Natural killer cell (primary cell): ENCODE measurements at regions of chr6 and their contacts with region 1.

Region 1: DNA sequence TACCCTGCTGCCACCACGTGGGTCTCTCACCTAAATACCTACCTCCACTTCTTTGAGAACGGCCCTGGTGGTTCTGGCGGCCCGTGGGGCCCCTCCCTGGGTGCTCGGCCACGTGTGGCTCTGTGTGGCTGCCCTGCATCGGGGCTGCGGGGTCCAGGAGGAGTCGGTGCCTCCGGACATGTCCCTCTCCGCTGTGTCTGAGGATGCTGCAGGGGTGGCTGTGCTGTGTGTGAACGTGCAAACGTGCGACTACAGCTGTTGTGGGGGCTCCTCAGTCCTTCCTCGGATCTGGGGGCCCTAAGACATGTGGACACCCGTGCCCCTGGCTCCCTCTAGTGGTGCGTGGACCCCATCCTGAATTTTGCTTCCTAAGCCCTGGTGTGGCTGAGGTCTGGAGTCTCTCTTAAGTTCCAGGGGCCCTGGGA is 691.8 kb downstream of the QKI start:
- DNase-seq: peak in 1 of 2 donors; percentile 25
- ATAC-seq: no peak
- H3K4me3 ChIP-seq: no peak overlapping the region
- H3K4me3 Mint-ChIP-seq: no peak overlapping the region
- H3K27ac ChIP-seq: no peak overlapping the region
- H3K27ac Mint-ChIP-seq: no peak overlapping the region
- H3K4me1 ChIP-seq: peaks cover 16% of the 10 kb centered on the region
- H3K4me1 Mint-ChIP-seq: peaks cover 27% of the 10 kb centered on the region in 2 donors
- H3K27me3 ChIP-seq: no peaks in the 10 kb centered on the region
- H3K27me3 Mint-ChIP-seq: peaks cover 16 to 36% of the 10 kb centered on the region in 2 donors
- CTCF ChIP-seq: peak; percentile 28

Region 2: GRCh38 chr6:163984124-163984936 is 122.0 kb before region 1 on chr6:
- intact Hi-C with region 1: loop called (anchors 10 kb)
- DNase-seq: peak in 1 of 2 donors; percentile 4
- ATAC-seq: peak; percentile 81 to 92 (median 84)
- H3K4me3 ChIP-seq: no peak overlapping the region
- H3K4me3 Mint-ChIP-seq: peak overlapping the region; percentile 65
- H3K27ac ChIP-seq: peak overlapping the region; percentile 13
- H3K27ac Mint-ChIP-seq: peak overlapping the region in 1 of 2 donors; percentile 48
- H3K4me1 ChIP-seq: peaks cover 12% of the 10 kb centered on the region
- H3K4me1 Mint-ChIP-seq: peaks cover 23 to 28% of the 10 kb centered on the region in 2 donors
- H3K27me3 ChIP-seq: no peaks in the 10 kb centered on the region
- H3K27me3 Mint-ChIP-seq: peaks cover 0 to 6% of the 10 kb centered on the region in 2 donors
- CTCF ChIP-seq: no peak

Region 3: DNA sequence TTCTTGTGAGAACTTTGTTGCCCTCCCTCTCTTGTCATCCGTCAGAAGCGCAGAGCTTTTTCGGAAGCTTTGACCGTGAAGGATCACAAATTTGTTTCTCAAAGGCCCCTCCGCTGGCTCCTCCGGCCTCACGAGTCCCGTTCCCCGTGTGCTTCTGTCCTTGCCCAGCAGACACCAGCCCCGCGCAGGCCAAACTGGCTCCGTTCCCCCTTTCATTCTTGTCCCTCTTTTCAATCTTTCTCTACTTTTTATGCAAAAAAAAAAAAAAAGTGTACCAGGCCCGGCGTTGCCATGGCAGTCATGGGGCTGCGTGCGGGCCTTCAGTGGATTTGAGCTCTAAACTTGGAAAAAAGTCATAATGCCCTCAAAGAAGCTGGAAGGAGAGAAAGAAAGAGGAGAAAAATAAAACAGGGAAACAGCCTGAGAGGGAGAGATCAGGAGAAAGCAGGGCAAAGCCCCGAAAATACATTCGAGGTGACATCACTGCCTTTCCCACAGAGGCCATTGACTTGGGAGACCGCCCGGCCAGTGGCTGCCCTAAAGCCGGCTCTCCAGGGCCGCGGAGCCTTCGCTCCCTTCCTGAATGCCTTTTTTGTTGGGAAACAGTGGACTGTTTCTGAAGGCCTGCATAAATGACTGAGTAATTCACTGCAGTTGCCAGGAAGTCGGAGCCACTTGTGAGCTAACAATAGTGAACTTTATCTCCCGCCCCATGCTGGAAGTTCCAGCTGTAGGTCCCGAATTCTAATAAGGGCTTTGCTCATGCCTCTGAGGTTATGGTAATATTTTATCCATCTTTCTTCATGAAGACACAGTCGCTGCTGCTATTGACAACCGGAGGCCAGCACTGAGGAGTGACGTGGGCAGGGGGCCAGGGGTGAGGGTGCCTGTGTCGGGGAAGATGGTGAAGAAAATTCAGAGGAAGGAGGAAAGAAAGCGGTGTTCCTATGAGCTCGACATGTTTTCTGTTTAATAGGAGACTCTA is 21.0 kb before region 1 on chr6:
- intact Hi-C with region 1: loop called (anchors 1 kb)
- DNase-seq: no peak
- ATAC-seq: no peak
- H3K4me3 ChIP-seq: peak overlapping the region; percentile 11
- H3K4me3 Mint-ChIP-seq: peak overlapping the region; percentile 81
- H3K27ac ChIP-seq: peak overlapping the region; percentile 54
- H3K27ac Mint-ChIP-seq: peak overlapping the region; percentile 70 to 87
- H3K4me1 ChIP-seq: peaks cover 21% of the 10 kb centered on the region
- H3K4me1 Mint-ChIP-seq: peaks cover 23 to 26% of the 10 kb centered on the region in 2 donors
- H3K27me3 ChIP-seq: no peaks in the 10 kb centered on the region
- H3K27me3 Mint-ChIP-seq: peaks cover 3 to 19% of the 10 kb centered on the region in 2 donors
- CTCF ChIP-seq: no peak

Region 4: GRCh38 chr6:164133095-164133494 is 26.7 kb after region 1 on chr6:
- intact Hi-C with region 1: no loop called
- DNase-seq: no peak
- ATAC-seq: no peak
- H3K4me3 ChIP-seq: no peak overlapping the region
- H3K4me3 Mint-ChIP-seq: no peak overlapping the region
- H3K27ac ChIP-seq: no peak overlapping the region
- H3K27ac Mint-ChIP-seq: no peak overlapping the region
- H3K4me1 ChIP-seq: no peaks in the 10 kb centered on the region
- H3K4me1 Mint-ChIP-seq: no peaks in the 10 kb centered on the region
- H3K27me3 ChIP-seq: no peaks in the 10 kb centered on the region
- H3K27me3 Mint-ChIP-seq: peaks cover 4 to 12% of the 10 kb centered on the region in 2 donors
- CTCF ChIP-seq: no peak